ENCODE measurements at regions of chrX and their contacts with region 1.

Region 1: GRCh38 chrX:53317365-53318069 is 36.1 kb upstream of the IQSEC2 start:
- DNase-seq: peak; percentile 62 to 97 (median 76)

Region 2: GRCh38 chrX:53330331-53330730 is 12.8 kb after region 1 on chrX:
- intact Hi-C with region 1: loop called (anchors 2 kb)
- DNase-seq: peak in 2 of 10 donors; percentile 24 to 74

Region 3: DNA sequence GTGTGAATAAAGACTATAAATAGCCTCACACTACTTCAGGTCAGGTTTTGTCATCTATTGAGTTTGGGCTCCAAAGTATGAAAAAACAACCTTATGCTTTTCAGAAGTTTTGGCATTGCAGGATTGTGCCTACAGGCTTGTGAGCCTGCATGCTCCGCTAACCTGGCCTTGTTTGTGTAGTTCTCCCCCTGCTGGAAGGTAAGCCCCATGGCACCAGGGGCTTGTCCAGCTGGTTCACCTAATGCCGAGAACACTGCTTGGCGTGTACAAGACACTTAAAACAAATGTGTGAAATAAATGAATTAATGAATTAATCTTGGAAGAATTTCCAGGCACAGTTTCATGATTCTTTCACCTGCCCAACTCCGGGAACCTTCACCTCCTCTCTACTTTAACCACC is 118.5 kb after region 1 on chrX:
- intact Hi-C with region 1: loop called (anchors 5 kb)
- DNase-seq: peak in 6 of 10 donors; percentile 14 to 91 (median 42)

Region 4: GRCh38 chrX:53695946-53696549 is 378.5 kb after region 1 on chrX:
- intact Hi-C with region 1: no loop called
- DNase-seq: peak in 3 of 10 donors; percentile 8 to 89 (median 10)

Measured in posterior cingulate gyrus (tissue), 11 donors.